Activated CD4-positive, alpha-beta T cell treated with anti-CD3 and anti-CD28 coated beads, Interleukin-2, amount 10 ng/mL, durations not matched to agents 24 days and 14 days (primary cell): ENCODE measurements at regions of chr20 and their contacts with region 1.

Region 1: DNA sequence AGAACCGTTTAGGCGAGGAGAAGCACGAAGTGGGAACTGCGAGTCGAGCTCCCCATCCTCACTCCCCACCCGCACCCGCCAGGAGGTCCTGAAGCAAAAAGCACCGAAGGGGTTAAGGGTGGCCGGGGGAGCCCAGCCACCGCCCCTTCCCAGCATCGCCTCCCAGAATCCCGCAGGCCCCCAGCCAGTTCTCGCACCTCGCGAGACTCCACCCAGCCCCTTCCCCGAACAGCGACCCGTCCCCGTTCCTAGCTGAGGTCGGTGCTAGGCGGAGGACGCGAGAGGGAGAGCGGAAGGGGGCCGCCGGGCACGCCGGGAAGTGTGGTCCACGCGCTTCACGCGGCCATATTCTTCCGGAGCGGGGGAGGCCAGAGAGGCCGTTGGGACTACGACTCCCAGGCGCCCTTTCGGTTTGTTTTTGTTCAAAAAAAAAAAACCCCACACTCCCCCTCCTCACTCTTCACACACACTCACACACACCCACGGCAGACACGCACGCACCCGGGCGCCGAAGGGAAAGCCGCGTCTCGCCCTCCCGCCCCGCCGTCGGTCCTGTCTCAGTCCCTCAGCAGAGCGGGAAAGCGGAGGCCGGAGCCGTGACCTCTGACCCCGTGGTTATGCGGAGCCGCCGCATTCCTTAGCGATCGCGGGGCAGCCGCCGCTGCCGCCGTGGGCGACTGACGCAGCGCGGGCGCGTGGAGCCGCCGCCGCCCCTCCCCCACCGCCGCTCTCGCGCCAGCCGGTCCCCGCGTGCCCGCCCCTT is at the start of gene ASXL1:
- DNase-seq: peak; percentile 99
- H3K4me3 Mint-ChIP-seq: peak within 1 kb of the TSS; percentile 90
- H3K27ac Mint-ChIP-seq: peak within 1 kb of the TSS; percentile 100
- H3K4me1 Mint-ChIP-seq: peaks cover 53% of the 10 kb centered on the region
- H3K27me3 Mint-ChIP-seq: no peaks in the 10 kb centered on the region
- total RNA-seq, gene ASXL1: 126 and 142 TPM in 2 replicates

Region 2: GRCh38 chr20:32109392-32110172 is 248.5 kb before region 1 on chr20 and contains the start of gene TM9SF4:
- intact Hi-C with region 1: loop called (anchors 1 kb)
- DNase-seq: peak; percentile 97
- H3K4me3 Mint-ChIP-seq: peak within 1 kb of the TSS; percentile 92
- H3K27ac Mint-ChIP-seq: peak within 1 kb of the TSS; percentile 100
- H3K4me1 Mint-ChIP-seq: peaks cover 31% of the 10 kb centered on the region
- H3K27me3 Mint-ChIP-seq: peaks cover 3% of the 10 kb centered on the region
- total RNA-seq, gene TM9SF4: 48.9 and 49.8 TPM in 2 replicates

Region 3: DNA sequence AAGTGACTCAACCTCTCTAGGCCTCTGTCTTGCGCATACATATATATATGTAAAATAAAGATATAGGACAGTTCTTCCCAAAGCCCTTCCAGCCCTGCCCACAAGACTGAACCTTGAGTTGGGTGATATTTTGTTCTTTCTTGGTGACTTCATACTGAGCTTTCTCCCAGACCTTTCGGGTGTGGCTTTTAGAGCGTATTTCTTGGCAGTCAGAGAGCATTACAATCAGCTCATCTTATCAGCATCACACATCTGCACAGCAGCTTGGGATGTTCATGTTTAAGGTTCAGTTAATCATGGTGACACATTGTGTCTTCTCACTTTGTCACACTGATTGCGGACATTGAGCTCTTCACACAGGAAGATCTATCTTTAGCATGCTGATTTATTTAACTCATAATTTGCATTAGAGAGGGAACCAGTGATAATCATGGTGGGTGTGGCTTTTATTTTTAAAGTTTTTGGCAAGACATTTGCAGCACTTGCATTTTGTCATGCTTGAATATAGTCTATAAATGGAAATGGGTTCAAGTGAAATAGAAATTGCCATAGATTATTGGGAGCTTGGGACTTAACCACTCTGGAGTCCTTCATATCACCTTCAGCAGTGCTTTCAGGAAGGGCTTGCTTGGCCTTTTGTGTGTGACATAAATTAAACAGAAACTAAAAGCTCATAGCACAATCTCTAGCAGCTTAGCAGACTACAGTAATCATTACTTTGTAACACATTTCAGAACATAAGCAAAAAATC is 72.3 kb before region 1 on chr20:
- intact Hi-C with region 1: loop called (anchors 1 kb)
- DNase-seq: peak; percentile 81
- H3K4me3 Mint-ChIP-seq: peak overlapping the region; percentile 59
- H3K27ac Mint-ChIP-seq: peak overlapping the region; percentile 87
- H3K4me1 Mint-ChIP-seq: peaks cover 54% of the 10 kb centered on the region
- H3K27me3 Mint-ChIP-seq: no peaks in the 10 kb centered on the region

Region 4: DNA sequence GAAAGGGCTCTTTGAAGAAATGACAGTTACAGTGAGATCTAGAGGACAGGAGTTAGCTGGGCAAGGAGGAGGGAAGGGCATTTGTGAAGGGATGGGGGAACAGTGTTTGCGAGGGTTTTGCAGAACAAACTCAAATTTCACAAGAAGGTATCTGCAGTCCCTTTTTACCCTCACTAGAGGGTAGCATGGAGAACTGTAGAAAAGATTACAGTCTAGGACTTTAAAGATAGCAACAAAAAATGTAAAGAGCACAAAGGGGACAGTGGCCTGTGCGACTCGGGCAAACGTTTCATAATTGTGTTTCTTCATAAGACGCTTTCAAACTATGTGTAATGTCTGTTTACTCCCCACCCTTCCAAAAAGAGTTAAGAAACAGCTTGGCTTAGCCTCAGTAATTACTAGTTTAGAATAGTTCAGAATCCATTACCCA is 21.1 kb before region 1 on chr20:
- intact Hi-C with region 1: loop called (anchors 1 kb)
- DNase-seq: peak; percentile 65
- H3K4me3 Mint-ChIP-seq: no peak overlapping the region
- H3K27ac Mint-ChIP-seq: peak overlapping the region; percentile 4
- H3K4me1 Mint-ChIP-seq: peaks cover 33% of the 10 kb centered on the region
- H3K27me3 Mint-ChIP-seq: no peaks in the 10 kb centered on the region

Region 5: GRCh38 chr20:32380745-32381144 is 22.7 kb after region 1 on chr20:
- intact Hi-C with region 1: no loop called
- DNase-seq: no peak
- H3K4me3 Mint-ChIP-seq: no peak overlapping the region
- H3K27ac Mint-ChIP-seq: no peak overlapping the region
- H3K4me1 Mint-ChIP-seq: peaks cover 19% of the 10 kb centered on the region
- H3K27me3 Mint-ChIP-seq: no peaks in the 10 kb centered on the region

Region 6: GRCh38 chr20:32484958-32485769 is 127.1 kb after region 1 on chr20:
- intact Hi-C with region 1: loop called (anchors 5 kb)
- DNase-seq: peak; percentile 94
- H3K4me3 Mint-ChIP-seq: peak overlapping the region; percentile 85
- H3K27ac Mint-ChIP-seq: peak overlapping the region; percentile 86
- H3K4me1 Mint-ChIP-seq: peaks cover 19% of the 10 kb centered on the region
- H3K27me3 Mint-ChIP-seq: no peaks in the 10 kb centered on the region